K562 (cell line): ENCODE measurements at regions of chr16 and their contacts with region 1.

Region 1: DNA sequence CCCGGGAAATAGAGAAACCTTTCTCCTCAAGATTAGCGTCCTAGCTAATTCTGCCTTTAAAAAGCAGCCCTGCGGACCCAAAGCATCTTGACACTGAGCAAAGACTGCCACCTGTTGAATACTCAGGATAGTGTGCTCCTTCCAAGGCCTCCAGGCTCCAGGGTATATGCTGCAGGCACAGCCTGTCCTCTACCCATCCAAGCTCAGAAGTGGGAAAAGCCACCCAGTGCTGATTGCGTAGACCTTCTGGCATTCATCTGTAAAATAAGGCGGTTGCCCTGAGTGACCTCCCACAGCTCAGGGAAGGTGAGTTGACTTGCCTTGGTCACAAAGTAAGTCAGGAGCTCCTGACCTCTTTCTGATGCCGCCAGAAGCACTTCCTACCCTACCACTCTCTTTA is 456.1 kb upstream of the DYNLRB2 start:
- DNase-seq: peak; percentile 40 to 67 (median 50)
- ATAC-seq: peak; percentile 99
- H3K4me3 ChIP-seq: no peak overlapping the region
- H3K27ac ChIP-seq: no peak overlapping the region
- H3K4me1 ChIP-seq: peaks cover 0 to 6% of the 10 kb centered on the region in 2 experiments; a peak in 3 of 5 replicates
- H3K27me3 ChIP-seq: no peaks in the 10 kb centered on the region
- CTCF ChIP-seq: peak; percentile 76 to 90 (median 76)
- EP300 ChIP-seq: 0 out of 2 replicates have a peak, but pooled peaks have one; percentile 5
- POLR2A ChIP-seq: no peak
- RAD21 ChIP-seq: peak; percentile 91 to 96

Region 2: GRCh38 chr16:79601931-79602627 is 482.6 kb before region 1 on chr16:
- CTCF ChIA-PET with region 1: no interaction called
- POLR2A ChIA-PET with region 1: no interaction called
- in situ Hi-C with region 1: no loop called
- intact Hi-C with region 1: loop called (anchors 2 kb)
- DNase-seq: peak; percentile 60 to 76 (median 64)
- ATAC-seq: peak; percentile 84
- H3K4me3 ChIP-seq: no peak overlapping the region
- H3K27ac ChIP-seq: no peak overlapping the region
- H3K4me1 ChIP-seq: peaks cover 0 to 27% of the 10 kb centered on the region in 2 experiments; a peak in 3 of 5 replicates
- H3K27me3 ChIP-seq: peaks cover 13 to 19% of the 10 kb centered on the region in 2 experiments
- CTCF ChIP-seq: peak; percentile 62 to 85 (median 82)
- EP300 ChIP-seq: 0 out of 2 replicates have a peak, but pooled peaks have one; percentile 11
- POLR2A ChIP-seq: no peak
- RAD21 ChIP-seq: peak; percentile 54 to 77

Region 3: GRCh38 chr16:79845033-79845733 is 239.5 kb before region 1 on chr16:
- CTCF ChIA-PET with region 1: no interaction called
- POLR2A ChIA-PET with region 1: no interaction called
- in situ Hi-C with region 1: no loop called
- intact Hi-C with region 1: loop called (anchors 5 kb)
- DNase-seq: no peak
- ATAC-seq: peak; percentile 10; the same call in 2 of the 3 replicates
- H3K4me3 ChIP-seq: peak overlapping the region; percentile 39
- H3K27ac ChIP-seq: peak overlapping the region; percentile 75
- H3K4me1 ChIP-seq: peaks cover 16 to 37% of the 10 kb centered on the region in 2 experiments; a peak in 4 of 5 replicates
- H3K27me3 ChIP-seq: no peaks in the 10 kb centered on the region
- CTCF ChIP-seq: no peak
- EP300 ChIP-seq: no peak
- POLR2A ChIP-seq: no peak
- RAD21 ChIP-seq: no peak; a peak in 1 of 4 replicates

Region 4: GRCh38 chr16:79997257-79997656 is 87.4 kb before region 1 on chr16:
- CTCF ChIA-PET with region 1: no interaction called
- POLR2A ChIA-PET with region 1: no interaction called
- in situ Hi-C with region 1: no loop called
- intact Hi-C with region 1: loop called (anchors 1 kb)
- DNase-seq: peak; percentile 39 to 69 (median 53)
- ATAC-seq: peak; percentile 93
- H3K4me3 ChIP-seq: no peak overlapping the region
- H3K27ac ChIP-seq: no peak overlapping the region
- H3K4me1 ChIP-seq: peaks cover 3 to 18% of the 10 kb centered on the region in 2 experiments; a peak in 3 of 5 replicates
- H3K27me3 ChIP-seq: no peaks in the 10 kb centered on the region; a peak in 1 of 5 replicates
- CTCF ChIP-seq: peak; percentile 63 to 78 (median 78)
- EP300 ChIP-seq: no peak; the same call in 1 of the 2 replicates
- POLR2A ChIP-seq: no peak
- RAD21 ChIP-seq: peak; percentile 48 to 67

Region 5: DNA sequence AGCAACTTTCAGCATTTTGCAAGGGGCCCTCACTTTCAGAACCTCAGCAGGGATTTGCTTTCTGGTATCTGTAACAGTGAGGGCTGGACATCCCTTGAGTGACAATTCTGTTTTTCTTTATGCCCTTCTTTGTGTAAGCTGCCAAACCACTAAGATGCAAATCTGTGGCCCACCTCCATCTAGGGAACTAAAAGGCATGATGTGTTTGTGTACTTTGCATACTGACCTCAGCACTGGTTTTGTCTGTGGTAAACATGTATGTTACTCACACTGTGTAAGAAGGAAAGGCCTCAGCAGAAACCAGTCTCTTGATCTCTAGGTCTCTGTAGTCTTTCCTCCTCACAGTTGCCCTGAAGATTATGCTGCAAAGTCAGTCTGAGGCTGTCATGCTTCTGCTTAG is 59.5 kb after region 1 on chr16:
- CTCF ChIA-PET with region 1: no interaction called
- POLR2A ChIA-PET with region 1: no interaction called
- in situ Hi-C with region 1: no loop called
- intact Hi-C with region 1: no loop called
- DNase-seq: no peak
- ATAC-seq: no peak
- H3K4me3 ChIP-seq: no peak overlapping the region
- H3K27ac ChIP-seq: no peak overlapping the region
- H3K4me1 ChIP-seq: no peaks in the 10 kb centered on the region
- H3K27me3 ChIP-seq: peaks cover 0 to 12% of the 10 kb centered on the region in 2 experiments; a peak in 2 of 5 replicates
- CTCF ChIP-seq: no peak
- EP300 ChIP-seq: no peak
- POLR2A ChIP-seq: no peak
- RAD21 ChIP-seq: no peak

Region 6: DNA sequence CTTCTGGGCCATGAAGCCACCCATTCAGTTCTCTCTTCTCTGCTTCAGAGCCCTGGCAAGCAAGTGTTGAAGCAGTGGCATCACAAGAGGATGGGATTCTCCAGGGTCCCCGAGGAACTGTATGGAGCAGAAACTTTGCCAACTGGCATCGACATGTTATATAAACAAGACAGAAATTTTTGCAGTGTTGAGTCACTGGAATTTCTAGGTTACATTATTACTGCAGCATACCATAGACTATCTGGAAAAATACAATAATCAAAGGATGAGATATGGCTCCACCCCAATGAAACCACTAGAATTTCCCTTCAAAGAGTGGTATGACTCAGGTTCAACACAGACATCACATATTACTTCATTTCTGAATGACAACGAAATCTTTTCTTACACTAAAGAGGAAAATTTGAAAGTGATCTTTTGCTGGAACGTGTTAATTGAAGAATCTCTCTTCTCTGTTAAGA is 113.1 kb after region 1 on chr16:
- CTCF ChIA-PET with region 1: no interaction called
- POLR2A ChIA-PET with region 1: no interaction called
- in situ Hi-C with region 1: no loop called
- intact Hi-C with region 1: no loop called
- DNase-seq: no peak
- ATAC-seq: no peak
- H3K4me3 ChIP-seq: no peak overlapping the region
- H3K27ac ChIP-seq: no peak overlapping the region
- H3K4me1 ChIP-seq: no peaks in the 10 kb centered on the region
- H3K27me3 ChIP-seq: no peaks in the 10 kb centered on the region
- CTCF ChIP-seq: no peak
- EP300 ChIP-seq: no peak
- POLR2A ChIP-seq: no peak
- RAD21 ChIP-seq: no peak

Region 7: DNA sequence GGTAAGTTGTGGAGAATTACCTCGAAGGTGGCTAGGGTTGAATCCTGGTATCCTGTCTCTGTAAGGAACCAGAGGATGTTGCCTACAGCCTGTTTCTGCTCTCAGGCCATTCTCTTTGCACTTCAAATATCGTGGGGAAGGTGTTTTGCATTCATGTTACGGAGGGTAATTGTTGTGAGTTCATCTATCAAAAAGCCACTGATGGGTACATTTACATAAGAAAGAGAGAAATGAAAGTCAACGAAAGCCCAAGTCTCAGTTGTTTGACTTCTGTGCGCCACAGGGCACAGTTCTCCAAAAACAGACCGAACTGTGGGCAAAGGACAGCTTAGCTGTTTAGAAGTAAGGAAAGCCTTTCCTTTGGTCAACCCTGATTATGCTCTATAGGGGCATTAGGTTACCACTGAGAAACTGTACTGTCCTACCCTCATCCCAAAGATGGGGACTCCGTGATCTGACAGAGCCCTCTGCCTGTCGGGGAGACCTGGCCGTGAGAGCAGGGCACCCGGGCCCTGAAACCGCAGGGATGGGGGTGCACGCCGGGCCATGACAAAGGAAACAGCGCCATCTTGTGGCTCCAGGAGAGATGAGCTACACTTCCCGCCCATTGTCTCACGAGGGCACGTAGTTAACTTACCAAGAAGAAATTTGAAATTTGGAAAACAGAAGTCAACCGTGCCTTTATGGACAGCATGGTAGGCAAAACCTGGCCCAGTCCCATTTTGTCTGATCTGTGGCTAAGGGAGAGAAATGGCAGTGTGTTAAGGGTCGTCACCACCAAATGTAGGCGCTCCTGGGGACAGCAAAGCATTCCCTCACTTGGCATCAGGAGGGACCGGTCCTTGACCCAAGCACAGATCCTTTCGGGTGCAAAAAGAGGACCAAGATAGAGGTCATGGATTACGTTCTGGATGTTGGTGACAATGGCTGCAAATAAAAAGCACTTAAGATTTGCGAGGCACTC is 381.6 kb after region 1 on chr16:
- CTCF ChIA-PET with region 1: no interaction called
- POLR2A ChIA-PET with region 1: no interaction called
- in situ Hi-C with region 1: no loop called
- intact Hi-C with region 1: loop called (anchors 1 kb)
- DNase-seq: peak; percentile 80 to 86 (median 85)
- ATAC-seq: peak; percentile 100
- H3K4me3 ChIP-seq: no peak overlapping the region
- H3K27ac ChIP-seq: no peak overlapping the region
- H3K4me1 ChIP-seq: no peaks in the 10 kb centered on the region
- H3K27me3 ChIP-seq: no peaks in the 10 kb centered on the region
- CTCF ChIP-seq: peak; percentile 81 to 95 (median 90)
- EP300 ChIP-seq: no peak
- POLR2A ChIP-seq: no peak
- RAD21 ChIP-seq: peak; percentile 87 to 94